ENCODE measurements at regions of chrX and their contacts with region 1.

Region 1: GRCh38 chrX:72306851-72307645 is 1.3 kb upstream of the CITED1 start:
- DNase-seq: no peak
- H3K4me3 ChIP-seq: peak overlapping the region; percentile 58 to 70 (median 61)
- H3K27ac ChIP-seq: peak overlapping the region; percentile 45 to 66 (median 62)
- H3K4me1 ChIP-seq: peaks cover 21 to 57% (median 43%) of the 10 kb centered on the region in 4 donors
- H3K27me3 ChIP-seq: peaks cover 0 to 10% (median 0%) of the 10 kb centered on the region in 4 donors
- CTCF ChIP-seq: no peak
- EP300 ChIP-seq: no peak
- POLR2A ChIP-seq: no peak

Region 2: GRCh38 chrX:72181178-72182125 is 125.6 kb before region 1 on chrX and contains the start of gene PIN4:
- intact Hi-C with region 1: no loop called
- DNase-seq: peak; percentile 95
- H3K4me3 ChIP-seq: peak within 1 kb of the TSS; percentile 62 to 79 (median 68)
- H3K27ac ChIP-seq: peak within 1 kb of the TSS; percentile 68 to 81 (median 77)
- H3K4me1 ChIP-seq: peaks cover 6 to 20% (median 16%) of the 10 kb centered on the region in 4 donors
- H3K27me3 ChIP-seq: no peaks in the 10 kb centered on the region
- CTCF ChIP-seq: no peak
- EP300 ChIP-seq: no peak
- POLR2A ChIP-seq: no peak
- total RNA-seq, gene PIN4: 6.8 to 20.4 (median 11.5) TPM

Region 3: GRCh38 chrX:72540318-72540717 is 233.3 kb after region 1 on chrX:
- intact Hi-C with region 1: loop called (anchors 10 kb)
- DNase-seq: no peak
- H3K4me3 ChIP-seq: no peak overlapping the region
- H3K27ac ChIP-seq: peak overlapping the region in 1 of 4 donors; percentile 25
- H3K4me1 ChIP-seq: peaks cover 0 to 20% (median 12%) of the 10 kb centered on the region in 4 donors
- H3K27me3 ChIP-seq: no peaks in the 10 kb centered on the region
- CTCF ChIP-seq: peak in 2 of 3 experiments; percentile 31 to 33
- EP300 ChIP-seq: no peak
- POLR2A ChIP-seq: no peak

Measured in esophagus muscularis mucosa (tissue), 4 donors.